ENCODE measurements at regions of chr13 and their contacts with region 1.

Region 1: GRCh38 chr13:39616087-39616694 is 13.2 kb upstream of the LHFPL6 start:
- DNase-seq: peak; percentile 70
- H3K4me3 ChIP-seq: no peak overlapping the region
- H3K27ac ChIP-seq: no peak overlapping the region
- H3K4me1 ChIP-seq: no peaks in the 10 kb centered on the region
- H3K27me3 ChIP-seq: peaks cover 5 to 7% of the 10 kb centered on the region in 2 experiments
- CTCF ChIP-seq: peak; percentile 83 to 85
- POLR2A ChIP-seq: no peak

Region 2: GRCh38 chr13:39037880-39038568 is 578.2 kb before region 1 on chr13 and contains the starts of genes NHLRC3 and PROSER1:
- CTCF ChIA-PET with region 1: interaction called, 13 read pairs
- POLR2A ChIA-PET with region 1: no interaction called
- dilution Hi-C with region 1: no loop called
- intact Hi-C with region 1: no loop called
- DNase-seq: peak; percentile 89
- H3K4me3 ChIP-seq: peak within 1 kb of the TSS; percentile 75 to 98 (median 94)
- H3K27ac ChIP-seq: peak within 1 kb of the TSS; percentile 86
- H3K4me1 ChIP-seq: peaks cover 24% of the 10 kb centered on the region
- H3K27me3 ChIP-seq: no peaks in the 10 kb centered on the region
- CTCF ChIP-seq: no peak
- POLR2A ChIP-seq: peak; percentile 45
- total RNA-seq, gene NHLRC3: 10.2 and 11.9 TPM in 2 replicates
- total RNA-seq, gene PROSER1: 40.4 and 44.1 TPM in 2 replicates

Region 3: GRCh38 chr13:39132286-39133230 is 483.6 kb before region 1 on chr13:
- CTCF ChIA-PET with region 1: interaction called, 11 read pairs
- POLR2A ChIA-PET with region 1: no interaction called
- dilution Hi-C with region 1: no loop called
- intact Hi-C with region 1: no loop called
- DNase-seq: no peak
- H3K4me3 ChIP-seq: no peak overlapping the region
- H3K27ac ChIP-seq: no peak overlapping the region
- H3K4me1 ChIP-seq: no peaks in the 10 kb centered on the region
- H3K27me3 ChIP-seq: peaks cover 3 to 7% of the 10 kb centered on the region in 2 experiments
- CTCF ChIP-seq: no peak
- POLR2A ChIP-seq: no peak

Region 4: DNA sequence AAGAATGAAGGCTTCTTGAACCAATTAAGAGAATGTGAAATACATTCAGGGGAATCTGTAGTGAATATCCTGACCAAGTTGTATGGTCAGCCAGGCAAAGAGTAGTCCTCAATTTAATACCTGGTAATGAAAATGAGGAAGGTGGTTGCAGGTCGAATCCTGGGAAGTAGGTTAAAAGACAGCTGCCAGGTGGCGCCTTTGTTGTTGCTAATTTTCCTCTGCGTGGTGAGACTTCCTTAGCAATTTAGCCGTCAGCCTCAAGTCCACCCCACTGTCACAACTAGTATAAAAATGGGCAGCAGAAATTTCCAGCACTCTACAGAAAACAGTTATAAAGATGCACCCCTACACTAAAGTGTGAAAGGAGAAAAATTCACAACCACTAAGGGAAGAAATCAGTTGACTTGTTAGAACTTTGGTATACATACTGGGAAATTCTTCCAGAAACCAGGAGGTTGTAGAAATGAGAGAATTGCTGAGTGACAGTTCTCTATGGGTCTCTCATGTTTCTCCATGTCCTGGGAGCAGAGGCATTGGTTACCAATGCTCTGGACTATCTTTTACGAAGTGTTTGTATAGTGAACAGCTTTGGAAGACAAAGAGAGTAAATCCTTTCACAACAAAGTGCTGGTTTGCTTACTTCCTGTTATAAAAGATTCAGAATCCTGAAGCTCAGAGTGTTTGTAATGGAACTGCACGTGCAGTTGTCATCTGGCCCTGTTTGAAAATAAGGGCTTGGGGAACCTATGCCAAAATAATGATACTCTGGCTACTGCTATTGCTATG is 342.0 kb before region 1 on chr13:
- CTCF ChIA-PET with region 1: interaction called, 44 read pairs
- POLR2A ChIA-PET with region 1: no interaction called
- dilution Hi-C with region 1: no loop called
- intact Hi-C with region 1: loop called (anchors 1 kb)
- DNase-seq: peak; percentile 17
- H3K4me3 ChIP-seq: no peak overlapping the region
- H3K27ac ChIP-seq: no peak overlapping the region
- H3K4me1 ChIP-seq: no peaks in the 10 kb centered on the region
- H3K27me3 ChIP-seq: peaks cover 4 to 10% of the 10 kb centered on the region in 2 experiments
- CTCF ChIP-seq: no peak
- POLR2A ChIP-seq: no peak

Region 5: GRCh38 chr13:39415008-39415802 is 201.0 kb before region 1 on chr13:
- CTCF ChIA-PET with region 1: interaction called, 124 read pairs
- POLR2A ChIA-PET with region 1: no interaction called
- dilution Hi-C with region 1: no loop called
- intact Hi-C with region 1: loop called (anchors 1 kb)
- DNase-seq: peak; percentile 97
- H3K4me3 ChIP-seq: peak overlapping the region in 1 of 3 experiments; percentile 23
- H3K27ac ChIP-seq: peak overlapping the region; percentile 77
- H3K4me1 ChIP-seq: peaks cover 33% of the 10 kb centered on the region
- H3K27me3 ChIP-seq: no peaks in the 10 kb centered on the region
- CTCF ChIP-seq: peak; percentile 40 to 57
- POLR2A ChIP-seq: no peak

Region 6: DNA sequence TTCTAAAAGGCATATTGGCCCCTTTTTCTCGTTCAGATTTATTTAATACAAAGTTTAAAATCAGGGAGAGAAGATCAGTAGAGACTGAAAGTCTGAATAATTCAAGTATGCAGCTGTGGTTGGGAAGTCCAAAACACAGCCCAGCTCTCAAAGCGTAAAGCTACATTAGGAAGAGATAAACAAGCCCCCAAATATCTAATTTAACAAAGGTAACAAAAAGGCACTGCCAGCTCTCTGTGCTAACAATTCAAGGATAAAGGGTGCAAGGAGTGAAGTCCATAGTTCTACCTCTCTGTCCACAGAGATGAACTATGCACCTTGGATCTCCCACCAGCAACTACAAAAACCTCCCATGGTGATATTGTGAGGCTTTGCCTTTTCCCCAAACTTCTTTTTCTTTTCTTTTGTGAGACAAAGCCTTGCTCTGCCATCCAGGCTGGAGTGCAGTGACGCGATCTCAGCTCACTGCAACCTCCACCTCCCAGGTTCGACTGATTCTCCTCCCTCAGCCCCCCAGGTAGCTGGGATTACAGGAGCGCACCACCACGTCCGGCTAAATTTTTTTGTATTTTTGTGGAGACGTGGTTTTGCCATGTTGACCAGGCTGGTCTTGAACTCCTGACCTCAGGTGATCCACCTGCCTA is 117.6 kb before region 1 on chr13:
- CTCF ChIA-PET with region 1: interaction called, 18 read pairs
- POLR2A ChIA-PET with region 1: no interaction called
- dilution Hi-C with region 1: no loop called
- intact Hi-C with region 1: no loop called
- DNase-seq: no peak
- H3K4me3 ChIP-seq: no peak overlapping the region
- H3K27ac ChIP-seq: no peak overlapping the region
- H3K4me1 ChIP-seq: no peaks in the 10 kb centered on the region
- H3K27me3 ChIP-seq: no peaks in the 10 kb centered on the region
- CTCF ChIP-seq: no peak
- POLR2A ChIP-seq: no peak

Region 7: GRCh38 chr13:39635564-39635963 is 19.4 kb after region 1 on chr13:
- CTCF ChIA-PET with region 1: interaction called, 11 read pairs
- POLR2A ChIA-PET with region 1: no interaction called
- dilution Hi-C with region 1: no loop called
- intact Hi-C with region 1: no loop called
- DNase-seq: no peak
- H3K4me3 ChIP-seq: no peak overlapping the region
- H3K27ac ChIP-seq: no peak overlapping the region
- H3K4me1 ChIP-seq: no peaks in the 10 kb centered on the region
- H3K27me3 ChIP-seq: peaks cover 14 to 18% of the 10 kb centered on the region in 2 experiments
- CTCF ChIP-seq: no peak
- POLR2A ChIP-seq: no peak

Measured in endothelial cell of umbilical vein (primary cell).